Activated CD4-positive, alpha-beta T cell treated with anti-CD3 and anti-CD28 coated beads for 36 hours (primary cell): ENCODE measurements at regions of chr18 and their contacts with region 1.

Region 1: GRCh38 chr18:3447895-3448837 is 1.8 kb upstream of the TGIF1 start:
- DNase-seq: peak; percentile 94
- ATAC-seq: peak; percentile 69
- H3K4me3 Mint-ChIP-seq: peak overlapping the region; percentile 94
- H3K27ac Mint-ChIP-seq: peak overlapping the region; percentile 97
- H3K4me1 Mint-ChIP-seq: peaks cover 26% of the 10 kb centered on the region
- H3K27me3 Mint-ChIP-seq: no peaks in the 10 kb centered on the region

Region 2: DNA sequence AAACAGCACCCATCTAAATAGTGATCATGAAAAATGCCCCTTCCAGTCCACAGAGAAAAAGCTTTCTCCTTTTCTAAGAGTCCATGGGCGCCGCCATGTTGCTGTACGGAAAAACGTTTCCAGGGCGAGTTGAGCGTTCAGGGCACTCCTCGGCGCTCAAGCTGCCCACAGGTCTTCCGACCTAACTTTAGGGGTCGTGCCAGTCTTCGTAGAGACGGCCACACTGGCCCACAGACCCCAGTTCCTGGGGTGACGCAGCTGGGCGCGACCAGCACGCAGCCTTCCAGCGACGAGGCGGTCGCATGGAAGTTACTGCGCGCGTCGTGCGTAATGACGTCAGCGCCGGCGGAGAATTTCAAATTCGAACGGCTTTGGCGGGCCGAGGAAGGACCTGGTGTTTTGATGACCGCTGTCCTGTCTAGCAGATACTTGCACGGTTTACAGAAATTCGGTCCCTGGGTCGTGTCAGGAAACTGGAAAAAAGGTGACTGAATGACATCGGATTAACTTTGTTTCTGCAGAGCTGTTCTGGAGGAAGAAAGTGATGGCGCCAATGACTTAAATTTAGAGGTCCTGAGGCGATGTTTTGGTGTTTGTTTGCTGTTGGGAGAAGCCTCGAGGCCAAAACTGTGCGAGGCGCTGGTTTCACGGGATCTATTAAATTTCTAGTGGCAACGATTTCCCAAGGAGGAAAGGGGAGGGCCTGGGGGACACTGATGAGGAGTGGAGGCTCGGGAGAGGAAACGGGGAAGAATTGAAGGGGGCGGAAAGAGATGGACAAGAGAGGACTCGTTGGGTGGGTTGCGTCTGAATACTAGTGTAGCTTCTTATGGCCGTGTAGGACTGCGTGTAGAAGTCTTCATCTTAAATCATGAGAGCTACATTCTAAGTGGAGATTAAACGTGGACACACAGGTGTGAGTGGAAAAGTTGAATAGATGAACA is 876.7 kb before region 1 on chr18 and contains the starts of genes METTL4 and NDC80:
- CTCF ChIA-PET with region 1: no interaction called
- POLR2A ChIA-PET with region 1: no interaction called
- intact Hi-C with region 1: loop called in 1 of 2 experiments (anchors 2 kb)
- DNase-seq: peak; percentile 91
- ATAC-seq: peak; percentile 84
- H3K4me3 Mint-ChIP-seq: peak within 1 kb of the TSS; percentile 98
- H3K27ac Mint-ChIP-seq: peak within 1 kb of the TSS; percentile 95
- H3K4me1 Mint-ChIP-seq: peaks cover 55% of the 10 kb centered on the region
- H3K27me3 Mint-ChIP-seq: no peaks in the 10 kb centered on the region
- total RNA-seq, gene METTL4: 12.8 to 22.0 TPM
- total RNA-seq, gene NDC80: 84.7 to 88.5 TPM

Region 3: DNA sequence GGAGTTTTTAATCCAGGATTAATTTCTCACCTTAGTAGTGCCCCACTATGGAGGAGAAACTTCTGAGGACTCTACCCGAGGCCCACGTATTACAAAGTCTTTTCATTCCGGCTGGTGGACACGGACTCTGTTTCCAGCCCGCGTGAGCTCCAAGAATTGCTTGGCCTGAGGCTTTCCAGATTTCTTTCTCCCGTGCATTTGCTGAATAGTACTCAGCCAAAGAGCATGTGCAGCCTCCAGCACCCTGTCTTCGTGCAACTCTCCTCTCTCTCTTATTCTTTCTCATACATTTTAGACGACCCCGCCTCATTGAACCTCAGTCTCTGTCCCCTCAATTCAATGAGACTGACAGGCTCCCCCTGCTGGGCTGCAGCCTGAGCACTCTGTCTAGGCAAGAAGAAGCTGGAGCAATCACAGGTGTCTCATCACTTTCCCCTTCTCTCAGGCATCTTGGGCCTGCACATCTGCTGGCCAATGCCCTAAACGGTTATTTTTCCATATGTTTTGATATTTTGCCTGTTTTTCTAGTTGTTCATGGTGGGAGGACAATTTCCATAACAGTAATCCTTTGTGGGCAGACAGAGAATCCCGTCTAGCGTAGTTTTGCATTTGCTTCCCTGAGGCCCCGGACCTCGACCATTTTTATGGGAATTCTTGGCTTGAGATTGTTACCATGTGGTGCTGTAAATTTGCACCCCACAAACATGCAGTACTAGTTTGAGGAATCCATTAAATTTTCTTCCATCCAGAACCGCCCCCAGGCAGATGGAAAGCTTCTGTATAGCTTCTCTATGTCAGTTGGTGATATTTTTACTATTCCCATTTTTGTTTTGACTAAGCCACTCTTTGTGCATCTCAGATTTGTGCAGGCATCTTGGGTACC is 385.1 kb before region 1 on chr18:
- CTCF ChIA-PET with region 1: no interaction called
- POLR2A ChIA-PET with region 1: no interaction called
- intact Hi-C with region 1: loop called in 1 of 2 experiments (anchors 2 kb)
- DNase-seq: peak; percentile 88
- ATAC-seq: peak; percentile 34
- H3K4me3 Mint-ChIP-seq: peak overlapping the region; percentile 2
- H3K27ac Mint-ChIP-seq: peak overlapping the region; percentile 99
- H3K4me1 Mint-ChIP-seq: peaks cover 65% of the 10 kb centered on the region
- H3K27me3 Mint-ChIP-seq: no peaks in the 10 kb centered on the region

Region 4: GRCh38 chr18:3297025-3297984 is 150.9 kb before region 1 on chr18:
- CTCF ChIA-PET with region 1: interaction called, 24 read pairs
- POLR2A ChIA-PET with region 1: interaction called, 6 read pairs
- intact Hi-C with region 1: loop called (anchors 2 to 5 kb)
- DNase-seq: peak; percentile 97
- ATAC-seq: peak; percentile 97
- H3K4me3 Mint-ChIP-seq: peak overlapping the region; percentile 87
- H3K27ac Mint-ChIP-seq: peak overlapping the region; percentile 78
- H3K4me1 Mint-ChIP-seq: peaks cover 2% of the 10 kb centered on the region
- H3K27me3 Mint-ChIP-seq: peaks cover 22% of the 10 kb centered on the region

Region 5: GRCh38 chr18:3411854-3412268 is 36.3 kb before region 1 on chr18:
- CTCF ChIA-PET with region 1: interaction called, 5 read pairs
- POLR2A ChIA-PET with region 1: interaction called, 4 read pairs
- intact Hi-C with region 1: loop called in 1 of 2 experiments (anchors 2 kb)
- DNase-seq: peak; percentile 46
- ATAC-seq: peak; percentile 21
- H3K4me3 Mint-ChIP-seq: peak overlapping the region; percentile 31
- H3K27ac Mint-ChIP-seq: peak overlapping the region; percentile 58
- H3K4me1 Mint-ChIP-seq: peaks cover 19% of the 10 kb centered on the region
- H3K27me3 Mint-ChIP-seq: no peaks in the 10 kb centered on the region

Region 6: DNA sequence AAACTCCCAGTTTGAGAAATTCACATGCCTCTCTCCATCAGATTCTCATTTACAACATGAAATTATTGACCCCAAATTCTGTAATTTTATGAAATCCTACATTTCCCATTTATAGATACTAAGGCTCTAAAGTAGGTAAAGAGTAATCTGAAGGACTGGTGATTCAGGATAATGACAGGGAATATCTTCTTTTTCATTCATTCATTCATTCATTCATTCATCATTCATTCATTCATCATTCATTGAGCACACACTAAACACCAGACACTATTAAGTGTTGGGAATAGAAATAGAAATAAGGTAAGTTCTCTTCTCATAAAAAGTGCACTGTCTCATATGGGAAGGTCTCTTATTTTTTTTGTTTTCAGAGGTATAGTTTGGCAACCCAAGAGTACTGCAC is 118.7 kb after region 1 on chr18:
- CTCF ChIA-PET with region 1: no interaction called
- POLR2A ChIA-PET with region 1: no interaction called
- intact Hi-C with region 1: no loop called
- DNase-seq: no peak
- ATAC-seq: no peak
- H3K4me3 Mint-ChIP-seq: no peak overlapping the region
- H3K27ac Mint-ChIP-seq: no peak overlapping the region
- H3K4me1 Mint-ChIP-seq: no peaks in the 10 kb centered on the region
- H3K27me3 Mint-ChIP-seq: no peaks in the 10 kb centered on the region

Region 7: GRCh38 chr18:3604498-3605408 is 156.6 kb after region 1 on chr18:
- CTCF ChIA-PET with region 1: interaction called, 18 read pairs
- POLR2A ChIA-PET with region 1: interaction called, 9 read pairs
- intact Hi-C with region 1: loop called in 1 of 2 experiments (anchors 1 kb)
- DNase-seq: peak; percentile 59
- ATAC-seq: peak; percentile 69
- H3K4me3 Mint-ChIP-seq: no peak overlapping the region
- H3K27ac Mint-ChIP-seq: no peak overlapping the region
- H3K4me1 Mint-ChIP-seq: peaks cover 11% of the 10 kb centered on the region
- H3K27me3 Mint-ChIP-seq: no peaks in the 10 kb centered on the region